Activated CD4-positive, alpha-beta T cell treated with anti-CD3 and anti-CD28 coated beads, Interleukin-2, amount 10 ng/mL, durations not matched to agents 24 days and 14 days (primary cell): ENCODE measurements at regions of chr5 and their contacts with region 1.

Region 1: DNA sequence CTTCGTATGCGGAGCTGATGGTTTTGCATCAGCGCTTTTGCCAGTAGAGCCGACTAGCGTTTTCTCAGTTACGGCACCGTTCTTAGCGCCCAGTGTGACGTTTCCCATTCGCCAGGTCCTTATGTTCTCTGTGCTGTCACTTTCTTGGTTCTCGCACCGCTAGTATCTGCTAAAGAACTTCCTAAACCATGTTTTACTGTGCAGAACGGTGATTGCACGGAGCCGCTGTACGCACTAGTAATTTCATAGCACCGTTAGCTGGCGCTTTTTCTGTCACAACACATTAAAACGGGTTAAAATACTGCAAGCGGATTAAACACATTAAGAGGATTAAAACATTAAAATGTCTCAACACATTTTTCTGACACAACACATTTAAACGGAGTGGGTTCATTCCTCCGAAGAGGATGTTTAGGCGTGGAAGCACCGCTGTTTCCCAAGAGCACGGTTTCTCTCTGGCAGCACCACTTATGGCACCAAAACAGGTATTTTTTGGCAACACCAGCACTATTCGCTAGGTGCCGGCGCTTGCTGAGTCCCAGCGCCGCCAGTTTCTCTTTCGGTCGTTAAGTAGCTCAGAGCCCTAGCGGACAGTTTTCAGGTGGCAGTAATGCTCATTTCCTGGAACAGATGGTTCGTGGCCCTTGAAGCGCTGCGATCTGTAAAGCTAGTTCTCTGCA is 20.4 kb downstream of the ANXA2R start:
- DNase-seq: peak; percentile 95
- H3K4me3 Mint-ChIP-seq: peak overlapping the region; percentile 97
- H3K27ac Mint-ChIP-seq: peak overlapping the region; percentile 100
- H3K4me1 Mint-ChIP-seq: peaks cover 45% of the 10 kb centered on the region
- H3K27me3 Mint-ChIP-seq: no peaks in the 10 kb centered on the region

Region 2: GRCh38 chr5:42994246-42995151 is 25.3 kb before region 1 on chr5:
- intact Hi-C with region 1: loop called (anchors 1 kb)
- DNase-seq: peak; percentile 97
- H3K4me3 Mint-ChIP-seq: peak overlapping the region; percentile 96
- H3K27ac Mint-ChIP-seq: peak overlapping the region; percentile 100
- H3K4me1 Mint-ChIP-seq: peaks cover 40% of the 10 kb centered on the region
- H3K27me3 Mint-ChIP-seq: no peaks in the 10 kb centered on the region

Region 3: DNA sequence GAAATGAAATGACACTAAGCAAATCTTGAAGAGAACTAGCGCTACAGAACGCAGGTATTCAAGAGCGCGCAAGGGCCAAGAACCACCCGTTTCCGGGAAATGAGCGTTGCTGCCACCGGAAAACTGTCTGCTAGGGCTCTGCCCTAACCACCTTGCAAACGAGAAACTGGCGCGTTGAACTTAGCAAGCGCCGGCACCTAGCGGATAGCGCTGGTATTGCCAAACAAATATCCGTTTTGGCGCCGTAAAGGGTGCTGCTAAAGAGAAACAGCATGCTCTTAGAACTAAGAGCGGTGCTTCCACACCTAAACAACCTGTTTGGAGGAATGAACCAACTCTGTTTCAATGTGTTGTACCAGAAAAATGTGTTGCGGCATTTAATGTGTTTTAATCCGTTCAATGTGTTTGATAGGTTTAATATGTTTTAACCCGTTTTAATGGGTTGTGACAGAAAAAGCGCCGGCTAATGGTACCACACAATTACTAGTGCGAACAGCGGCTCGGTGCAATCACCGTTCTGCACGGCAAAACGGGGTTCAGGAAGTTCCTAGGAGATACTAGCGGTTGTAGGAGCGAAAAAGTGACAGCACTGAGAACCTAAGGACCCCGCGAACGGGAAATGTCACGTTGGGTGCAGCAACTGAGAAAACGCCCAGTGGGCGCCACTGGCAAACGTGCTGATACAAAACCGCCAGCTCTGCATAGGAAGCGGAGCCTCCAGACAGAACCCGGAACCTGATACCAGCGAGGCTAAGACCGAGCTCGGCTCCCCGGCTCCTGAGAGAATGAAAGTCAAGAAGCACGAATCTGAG is 20.7 kb after region 1 on chr5 and contains the start of gene ANXA2R:
- intact Hi-C with region 1: loop called (anchors 1 kb)
- DNase-seq: peak; percentile 98
- H3K4me3 Mint-ChIP-seq: peak within 1 kb of the TSS; percentile 94
- H3K27ac Mint-ChIP-seq: peak within 1 kb of the TSS; percentile 96
- H3K4me1 Mint-ChIP-seq: peaks cover 46% of the 10 kb centered on the region
- H3K27me3 Mint-ChIP-seq: no peaks in the 10 kb centered on the region
- total RNA-seq, gene ANXA2R: 1.1 and 1.2 TPM in 2 replicates

Region 4: GRCh38 chr5:43305948-43306565 is 286.3 kb after region 1 on chr5:
- intact Hi-C with region 1: no loop called
- DNase-seq: peak; percentile 76
- H3K4me3 Mint-ChIP-seq: peak overlapping the region; percentile 5
- H3K27ac Mint-ChIP-seq: peak overlapping the region; percentile 50
- H3K4me1 Mint-ChIP-seq: peaks cover 71% of the 10 kb centered on the region
- H3K27me3 Mint-ChIP-seq: no peaks in the 10 kb centered on the region